Heart left ventricle (tissue), 16 donors: ENCODE measurements at regions of chr22 and their contacts with region 1.

Region 1: GRCh38 chr22:17742527-17742902 is 31.8 kb downstream of the BID start:
- DNase-seq: peak; percentile 51 to 75 (median 62)
- ATAC-seq: peak; percentile 47 to 73 (median 68)
- H3K4me3 ChIP-seq: no peak overlapping the region
- H3K27ac ChIP-seq: no peak overlapping the region
- H3K4me1 ChIP-seq: peaks cover 0 to 16% (median 3%) of the 10 kb centered on the region in 12 donors
- H3K27me3 ChIP-seq: no peaks in the 10 kb centered on the region
- CTCF ChIP-seq: peak; percentile 67 to 80 (median 75)
- POLR2A ChIP-seq: no peak

Region 2: DNA sequence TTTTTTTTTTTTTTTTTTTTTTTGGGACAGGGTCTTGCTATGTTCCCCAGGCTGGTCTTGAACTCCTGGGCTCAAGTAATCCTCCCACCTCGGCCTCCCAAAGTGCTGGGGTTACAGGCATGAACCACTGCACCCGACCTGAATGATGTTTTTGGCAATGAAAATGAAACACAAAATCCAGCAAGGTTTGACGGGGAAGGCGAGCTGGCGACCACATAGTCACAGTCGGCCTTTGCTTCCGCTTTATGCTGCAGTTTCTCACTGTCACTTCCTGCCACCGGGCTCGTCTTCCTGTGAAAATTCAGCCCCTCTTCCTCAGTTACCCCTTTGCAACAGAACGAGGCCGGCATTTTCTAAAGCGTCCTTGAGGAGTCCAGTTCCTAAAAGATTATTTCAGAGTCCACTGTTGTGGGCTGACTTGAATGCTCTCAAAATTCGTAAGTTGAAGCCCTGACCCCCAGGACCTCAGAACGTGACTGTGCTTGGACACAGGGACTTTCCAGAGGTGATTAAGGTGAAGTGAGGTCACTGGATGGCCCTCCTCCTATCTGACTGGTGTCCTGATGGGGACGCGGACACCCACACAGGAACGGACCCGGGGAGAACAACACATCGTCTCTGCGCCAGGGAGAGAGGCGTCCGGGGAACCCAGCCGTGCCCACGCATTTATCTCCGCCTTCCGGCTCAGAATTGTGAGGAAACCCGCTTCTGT is 34.6 kb after region 1 on chr22:
- intact Hi-C with region 1: loop called in 1 of 10 experiments (anchors 5 kb)
- DNase-seq: peak in 4 of 5 donors; percentile 32 to 56 (median 49)
- ATAC-seq: peak in 1 of 4 donors; percentile 18
- H3K4me3 ChIP-seq: peak overlapping the region in 10 of 12 donors; percentile 16 to 65 (median 34)
- H3K27ac ChIP-seq: peak overlapping the region in 9 of 12 donors; percentile 25 to 95 (median 62)
- H3K4me1 ChIP-seq: peaks cover 0 to 70% (median 11%) of the 10 kb centered on the region in 12 donors
- H3K27me3 ChIP-seq: no peaks in the 10 kb centered on the region
- CTCF ChIP-seq: no peak
- POLR2A ChIP-seq: no peak

Region 3: GRCh38 chr22:17785185-17786184 is 43.0 kb after region 1 on chr22:
- intact Hi-C with region 1: loop called in 3 of 10 experiments (anchors 5 to 10 kb)
- DNase-seq: peak in 4 of 5 donors; percentile 62 to 82 (median 70)
- ATAC-seq: peak in 3 of 4 donors; percentile 6 to 28 (median 18)
- H3K4me3 ChIP-seq: no peak overlapping the region
- H3K27ac ChIP-seq: peak overlapping the region; percentile 59 to 90 (median 84)
- H3K4me1 ChIP-seq: peaks cover 0 to 57% (median 29%) of the 10 kb centered on the region in 12 donors
- H3K27me3 ChIP-seq: no peaks in the 10 kb centered on the region
- CTCF ChIP-seq: peak; percentile 25 to 65 (median 48)
- POLR2A ChIP-seq: no peak

Region 4: GRCh38 chr22:17797721-17798559 is 55.4 kb after region 1 on chr22:
- intact Hi-C with region 1: loop called in 2 of 10 experiments (anchors 10 kb)
- DNase-seq: no peak
- ATAC-seq: peak in 1 of 4 donors; percentile 53
- H3K4me3 ChIP-seq: no peak overlapping the region
- H3K27ac ChIP-seq: no peak overlapping the region
- H3K4me1 ChIP-seq: peaks cover 0 to 6% (median 0%) of the 10 kb centered on the region in 12 donors
- H3K27me3 ChIP-seq: no peaks in the 10 kb centered on the region
- CTCF ChIP-seq: no peak
- POLR2A ChIP-seq: no peak

Region 5: GRCh38 chr22:17807578-17808360 is 65.3 kb after region 1 on chr22:
- intact Hi-C with region 1: loop called in 1 of 10 experiments (anchors 10 kb)
- DNase-seq: peak; percentile 63 to 88 (median 75)
- ATAC-seq: peak; percentile 72 to 93 (median 82)
- H3K4me3 ChIP-seq: no peak overlapping the region
- H3K27ac ChIP-seq: peak overlapping the region in 11 of 12 donors; percentile 31 to 82 (median 69)
- H3K4me1 ChIP-seq: peaks cover 0 to 36% (median 9%) of the 10 kb centered on the region in 12 donors
- H3K27me3 ChIP-seq: no peaks in the 10 kb centered on the region
- CTCF ChIP-seq: no peak
- POLR2A ChIP-seq: no peak

Region 6: DNA sequence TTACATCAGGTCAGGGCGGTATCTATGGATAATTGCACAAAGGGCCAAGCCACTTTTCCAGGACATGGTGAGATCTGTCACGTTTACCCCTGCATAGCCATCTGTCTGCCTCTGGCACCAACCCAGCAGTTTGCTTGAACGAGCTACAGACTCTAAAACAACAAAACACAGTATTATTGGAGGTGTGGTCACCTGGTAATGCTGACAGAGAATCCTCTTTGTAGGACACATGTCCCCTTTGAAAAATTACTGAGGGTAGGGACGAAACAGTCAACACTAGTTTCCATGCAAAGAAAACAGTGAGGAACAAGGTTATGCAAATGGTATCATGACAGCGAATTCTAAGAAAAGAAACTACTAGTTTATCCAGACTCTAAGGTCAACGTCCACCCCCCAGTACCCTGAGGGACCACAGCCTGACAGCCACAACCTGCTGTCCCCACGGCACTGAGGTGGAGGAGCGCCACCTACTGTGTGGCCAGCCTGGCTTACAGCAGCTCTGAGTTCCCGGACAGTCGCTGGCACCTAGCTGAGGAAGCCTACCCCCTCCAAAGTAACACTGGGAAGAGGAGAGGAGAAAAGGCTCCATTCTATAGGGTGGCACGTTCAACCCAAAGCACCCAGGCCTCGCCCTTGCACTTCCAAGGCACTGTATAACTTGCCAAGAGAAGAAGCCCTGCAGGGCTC is 149.1 kb after region 1 on chr22:
- intact Hi-C with region 1: loop called in 4 of 10 experiments (anchors 5 to 10 kb)
- DNase-seq: peak in 4 of 5 donors; percentile 61 to 82 (median 68)
- ATAC-seq: peak; percentile 62 to 82 (median 72)
- H3K4me3 ChIP-seq: no peak overlapping the region
- H3K27ac ChIP-seq: peak overlapping the region; percentile 7 to 91 (median 80)
- H3K4me1 ChIP-seq: peaks cover 0 to 49% (median 18%) of the 10 kb centered on the region in 12 donors
- H3K27me3 ChIP-seq: no peaks in the 10 kb centered on the region
- CTCF ChIP-seq: peak; percentile 31 to 72 (median 58)
- POLR2A ChIP-seq: no peak